Heart right ventricle (tissue), 16 donors: ENCODE measurements at regions of chr19 and their contacts with region 1.

Region 1: GRCh38 chr19:17470068-17470841 is at the start of gene SLC27A1:
- DNase-seq: peak; percentile 97 to 99
- ATAC-seq: peak; percentile 88 to 93 (median 90)
- H3K4me3 ChIP-seq: peak within 1 kb of the TSS; percentile 60 to 99 (median 82)
- H3K27ac ChIP-seq: peak within 1 kb of the TSS; percentile 82 to 97 (median 96)
- H3K4me1 ChIP-seq: peaks cover 9 to 53% (median 30%) of the 10 kb centered on the region in 9 donors
- H3K27me3 ChIP-seq: no peaks in the 10 kb centered on the region
- CTCF ChIP-seq: peak in 1 of 9 donors; percentile 14
- total RNA-seq, gene SLC27A1: 37.1 to 64.5 (median 47.2) TPM

Region 2: DNA sequence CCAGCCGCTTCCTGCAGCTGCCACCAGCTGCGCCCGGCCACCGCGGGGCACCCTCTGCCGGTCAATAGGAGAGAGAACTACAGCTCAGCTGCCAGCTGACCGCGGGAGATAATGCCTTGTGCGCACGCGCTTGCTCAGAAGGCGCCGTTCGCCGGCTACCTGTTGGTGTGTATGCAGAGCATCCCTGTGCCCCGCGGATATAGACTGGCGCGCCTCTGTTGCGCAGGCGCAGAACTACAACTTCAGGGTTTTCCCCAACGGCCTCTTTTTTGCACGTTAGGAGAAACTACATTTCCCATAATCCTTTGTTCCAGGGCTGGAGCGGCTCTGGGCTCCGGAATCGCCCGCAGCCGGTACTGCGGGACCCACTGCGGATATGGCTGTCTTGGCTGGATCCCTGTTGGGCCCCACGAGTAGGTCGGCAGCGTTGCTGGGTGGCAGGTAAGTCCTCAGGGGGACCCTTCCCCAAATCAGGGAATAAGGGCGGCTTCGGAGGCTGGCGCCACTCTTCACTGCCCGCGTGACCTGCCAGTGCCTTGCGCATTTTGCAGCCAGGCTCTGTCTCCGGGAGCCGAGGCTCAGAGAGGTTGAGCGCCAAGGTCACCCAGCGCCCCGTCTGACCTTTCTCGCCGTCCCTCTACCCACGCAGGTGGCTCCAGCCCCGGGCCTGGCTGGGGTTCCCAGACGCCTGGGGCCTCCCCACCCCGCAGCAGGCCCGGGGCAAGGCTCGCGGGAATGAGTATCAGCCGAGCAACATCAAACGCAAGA is 164.6 kb before region 1 on chr19 and contains the start of gene MRPL34:
- intact Hi-C with region 1: loop called in 1 of 10 experiments (anchors 5 kb)
- DNase-seq: peak; percentile 93
- ATAC-seq: peak; percentile 50 to 83 (median 70)
- H3K4me3 ChIP-seq: peak within 1 kb of the TSS; percentile 63 to 88 (median 75)
- H3K27ac ChIP-seq: peak within 1 kb of the TSS; percentile 83 to 98 (median 93)
- H3K4me1 ChIP-seq: peaks cover 12 to 65% (median 61%) of the 10 kb centered on the region in 9 donors
- H3K27me3 ChIP-seq: no peaks in the 10 kb centered on the region
- CTCF ChIP-seq: peak; percentile 48 to 87 (median 70)
- total RNA-seq, gene MRPL34: 122 to 259 (median 151) TPM

Region 3: DNA sequence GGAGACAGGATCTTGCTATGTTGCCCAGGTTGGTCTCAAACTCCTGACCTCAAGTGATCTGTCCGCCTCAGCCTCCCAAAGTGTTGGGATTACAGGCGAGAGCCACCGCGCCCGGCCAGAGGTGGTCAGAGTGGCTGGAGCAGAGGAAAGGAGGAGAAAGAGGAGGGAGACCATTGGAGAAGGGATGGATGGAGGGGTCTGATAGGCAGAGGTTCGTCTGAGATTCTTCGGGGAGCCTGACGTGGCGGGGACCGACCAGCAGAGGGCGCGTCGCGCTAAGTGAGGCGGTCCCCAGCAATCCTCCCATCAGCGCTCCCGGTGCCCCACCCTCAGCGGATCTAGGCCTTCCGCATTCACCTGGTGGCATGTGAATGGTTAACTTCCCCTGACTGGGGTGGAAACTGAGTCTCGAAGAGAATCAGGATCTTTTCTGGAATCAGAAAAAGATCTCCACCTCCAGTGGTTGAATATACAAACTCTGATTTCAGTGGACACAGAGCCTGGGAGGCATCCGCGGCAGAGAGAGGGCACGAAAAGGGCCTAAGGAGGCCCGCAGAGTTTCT is 124.1 kb before region 1 on chr19:
- intact Hi-C with region 1: loop called in 8 of 10 experiments (anchors 2 to 10 kb)
- DNase-seq: peak; percentile 78 to 81
- ATAC-seq: peak; percentile 70 to 85 (median 78)
- H3K4me3 ChIP-seq: no peak overlapping the region
- H3K27ac ChIP-seq: peak overlapping the region in 8 of 10 donors; percentile 56 to 86 (median 77)
- H3K4me1 ChIP-seq: peaks cover 16 to 52% (median 36%) of the 10 kb centered on the region in 9 donors
- H3K27me3 ChIP-seq: peaks cover 0 to 19% (median 0%) of the 10 kb centered on the region in 7 donors
- CTCF ChIP-seq: peak; percentile 92 to 98 (median 97)

Region 4: GRCh38 chr19:17511724-17512573 is 41.7 kb after region 1 on chr19:
- intact Hi-C with region 1: loop called in 2 of 10 experiments (anchors 5 kb)
- DNase-seq: peak; percentile 90 to 93
- ATAC-seq: peak; percentile 84 to 89 (median 85)
- H3K4me3 ChIP-seq: peak overlapping the region; percentile 69 to 98 (median 92)
- H3K27ac ChIP-seq: peak overlapping the region; percentile 96 to 100 (median 100)
- H3K4me1 ChIP-seq: peaks cover 4 to 46% (median 26%) of the 10 kb centered on the region in 9 donors
- H3K27me3 ChIP-seq: no peaks in the 10 kb centered on the region
- CTCF ChIP-seq: peak in 6 of 9 donors; percentile 26 to 53 (median 42)